GM13976 (cell line): ENCODE measurements at regions of chr2 and their contacts with region 1.

Region 1: DNA sequence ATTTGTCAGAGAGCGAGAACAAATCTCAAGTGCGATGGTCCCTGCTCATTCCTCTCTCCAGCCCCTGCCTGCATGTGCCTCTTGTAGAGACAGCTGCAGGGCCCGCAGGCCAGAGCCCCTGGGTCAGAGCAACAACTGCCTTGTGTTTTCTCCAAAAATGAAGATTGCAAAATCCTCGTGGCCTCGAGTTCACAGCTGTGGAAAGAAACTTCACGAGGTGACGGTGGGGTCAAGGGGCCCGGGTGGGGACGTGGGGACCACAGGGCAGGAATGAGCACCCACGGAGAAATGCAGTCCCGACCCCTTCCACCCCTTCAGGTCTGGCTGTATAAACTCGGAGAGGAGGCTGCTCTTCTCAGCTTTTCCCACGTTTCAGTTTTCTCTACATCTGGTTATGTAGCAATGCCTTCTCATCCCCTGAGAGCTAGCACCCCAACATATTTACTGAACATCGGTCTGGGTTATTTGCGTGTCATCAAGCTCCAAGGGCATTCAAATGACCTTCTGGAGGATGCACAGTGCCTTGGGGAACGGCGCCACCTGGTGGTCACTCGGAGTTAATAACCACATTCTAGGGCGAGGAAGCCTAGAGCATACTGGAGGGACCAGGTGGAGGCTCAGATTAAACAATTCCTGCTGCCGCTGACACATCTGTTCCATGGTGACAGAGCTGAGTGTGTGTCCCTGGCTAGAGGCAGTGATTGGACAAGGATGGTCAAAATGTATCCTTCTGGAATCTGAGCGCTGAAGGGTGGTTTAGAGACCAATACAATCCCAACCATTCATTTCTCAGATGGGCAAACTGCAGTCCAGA is 91.4 kb upstream of the CYRIA start:
- DNase-seq: peak; percentile 70
- CTCF ChIP-seq: peak; percentile 76

Region 2: GRCh38 chr2:15874316-15874715 is 882.7 kb before region 1 on chr2:
- in situ Hi-C with region 1: no loop called
- DNase-seq: no peak
- CTCF ChIP-seq: no peak

Region 3: DNA sequence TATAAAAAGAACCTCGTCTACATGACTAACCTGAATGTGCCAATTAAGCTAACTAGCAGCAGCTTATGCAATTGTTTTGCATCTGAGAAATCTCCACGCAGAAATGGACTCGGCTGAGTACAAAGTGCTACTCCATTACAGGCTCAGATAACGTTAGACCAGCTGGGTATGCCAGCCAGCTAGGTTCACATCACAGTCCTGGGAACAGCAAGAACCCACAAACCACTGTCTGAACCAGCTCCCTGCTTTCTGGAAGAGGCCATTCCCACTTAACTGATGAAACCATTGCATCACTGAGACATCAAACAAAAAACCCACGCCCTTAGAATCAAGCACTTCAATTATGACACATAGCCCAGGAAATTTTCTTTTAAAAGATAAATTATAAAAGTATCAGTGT is 294.1 kb before region 1 on chr2:
- in situ Hi-C with region 1: no loop called
- DNase-seq: no peak
- CTCF ChIP-seq: no peak

Region 4: GRCh38 chr2:17658251-17658843 is 901.3 kb after region 1 on chr2:
- in situ Hi-C with region 1: loop called (anchors 25 kb)
- DNase-seq: no peak
- CTCF ChIP-seq: no peak